Heart right ventricle (tissue), 16 donors: ENCODE measurements at regions of chrX and their contacts with region 1.

Region 1: DNA sequence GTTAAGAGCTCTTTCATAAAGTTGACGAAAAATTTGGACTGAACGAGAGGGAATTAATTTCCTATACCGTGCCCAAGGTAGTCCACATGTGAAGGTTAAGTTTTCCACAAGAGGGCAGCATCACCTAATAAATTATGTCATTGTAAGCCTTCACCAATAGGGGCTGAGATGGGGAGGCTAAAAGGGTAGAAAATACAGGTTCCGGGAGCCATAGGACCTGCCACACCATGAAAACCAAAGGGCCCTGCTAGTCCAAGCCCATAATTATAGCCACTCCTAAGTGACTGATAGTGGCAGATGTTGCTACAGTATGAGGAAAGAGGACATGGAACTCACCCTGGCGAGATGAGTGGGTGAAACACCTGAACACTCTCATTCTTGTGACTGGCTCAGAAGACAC is 122.2 kb downstream of the SHROOM4 start:
- DNase-seq: no peak
- ATAC-seq: peak in 6 of 8 donors; percentile 44 to 65 (median 58)
- H3K4me3 ChIP-seq: no peak overlapping the region
- H3K27ac ChIP-seq: no peak overlapping the region
- H3K4me1 ChIP-seq: no peaks in the 10 kb centered on the region
- H3K27me3 ChIP-seq: peaks cover 0 to 59% (median 0%) of the 10 kb centered on the region in 7 donors
- CTCF ChIP-seq: peak; percentile 21 to 73 (median 63)

Region 2: GRCh38 chrX:50622751-50623150 is 69.1 kb before region 1 on chrX:
- intact Hi-C with region 1: no loop called
- DNase-seq: no peak
- ATAC-seq: no peak
- H3K4me3 ChIP-seq: no peak overlapping the region
- H3K27ac ChIP-seq: no peak overlapping the region
- H3K4me1 ChIP-seq: peaks cover 0 to 10% (median 2%) of the 10 kb centered on the region in 9 donors
- H3K27me3 ChIP-seq: peaks cover 0 to 18% (median 0%) of the 10 kb centered on the region in 7 donors
- CTCF ChIP-seq: no peak

Region 3: GRCh38 chrX:50905334-50905733 is 213.5 kb after region 1 on chrX:
- intact Hi-C with region 1: loop called in 2 of 10 experiments (anchors 5 kb)
- DNase-seq: no peak
- ATAC-seq: no peak
- H3K4me3 ChIP-seq: no peak overlapping the region
- H3K27ac ChIP-seq: no peak overlapping the region
- H3K4me1 ChIP-seq: no peaks in the 10 kb centered on the region
- H3K27me3 ChIP-seq: peaks cover 0 to 52% (median 0%) of the 10 kb centered on the region in 7 donors
- CTCF ChIP-seq: peak in 3 of 9 donors; percentile 6 to 44 (median 11)

Region 4: GRCh38 chrX:50920132-50920531 is 228.3 kb after region 1 on chrX:
- intact Hi-C with region 1: loop called in 3 of 10 experiments (anchors 5 kb)
- DNase-seq: no peak
- ATAC-seq: no peak
- H3K4me3 ChIP-seq: no peak overlapping the region
- H3K27ac ChIP-seq: no peak overlapping the region
- H3K4me1 ChIP-seq: no peaks in the 10 kb centered on the region
- H3K27me3 ChIP-seq: peaks cover 0 to 34% (median 0%) of the 10 kb centered on the region in 7 donors
- CTCF ChIP-seq: peak in 7 of 9 donors; percentile 25 to 49 (median 39)

Region 5: DNA sequence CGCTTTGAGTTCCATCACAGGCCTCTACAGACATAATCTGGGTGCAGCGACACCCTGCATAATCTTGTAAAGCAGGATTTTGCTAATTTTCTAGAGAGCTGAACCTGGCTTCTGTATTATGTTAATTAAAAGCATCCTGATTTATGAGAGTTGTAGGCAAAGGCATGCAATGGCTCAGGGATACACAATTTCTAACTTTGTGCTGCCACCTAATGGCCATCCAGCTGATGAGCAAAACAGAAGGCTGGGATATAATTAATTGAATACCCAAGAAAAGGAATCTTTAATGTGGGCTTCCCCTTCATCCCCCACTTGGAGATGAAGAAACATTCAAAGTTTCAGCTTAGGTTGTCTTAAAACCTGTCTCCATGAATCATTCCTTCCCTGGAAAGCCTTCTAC is 296.8 kb after region 1 on chrX:
- intact Hi-C with region 1: loop called in 8 of 10 experiments (anchors 2 to 10 kb)
- DNase-seq: peak in 1 of 2 donors; percentile 3
- ATAC-seq: no peak
- H3K4me3 ChIP-seq: no peak overlapping the region
- H3K27ac ChIP-seq: no peak overlapping the region
- H3K4me1 ChIP-seq: no peaks in the 10 kb centered on the region
- H3K27me3 ChIP-seq: peaks cover 0 to 46% (median 0%) of the 10 kb centered on the region in 7 donors
- CTCF ChIP-seq: peak in 8 of 9 donors; percentile 17 to 60 (median 56)

Region 6: DNA sequence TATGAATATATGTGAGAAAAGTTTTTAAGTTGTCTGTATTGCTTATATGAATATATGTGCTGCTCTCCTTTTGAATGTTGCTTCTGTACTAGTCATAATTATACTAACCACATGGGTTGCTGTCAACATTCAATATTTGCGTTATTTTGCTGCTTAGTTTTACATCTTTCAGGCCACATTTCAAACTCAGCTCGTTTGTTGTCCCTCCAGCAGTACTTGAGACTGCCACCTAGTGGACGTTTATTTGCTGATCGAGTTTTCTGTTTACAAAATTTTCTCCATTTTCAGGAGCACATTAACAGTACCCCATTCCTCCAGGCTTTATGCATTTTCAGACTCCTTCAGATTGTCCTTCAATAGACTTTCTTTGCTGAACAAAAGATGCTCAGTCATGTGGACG is 728.8 kb after region 1 on chrX:
- intact Hi-C with region 1: loop called in 1 of 10 experiments (anchors 10 kb)
- DNase-seq: peak in 1 of 2 donors; percentile 9
- ATAC-seq: no peak
- H3K4me3 ChIP-seq: no peak overlapping the region
- H3K27ac ChIP-seq: no peak overlapping the region
- H3K4me1 ChIP-seq: no peaks in the 10 kb centered on the region
- H3K27me3 ChIP-seq: peaks cover 0 to 65% (median 0%) of the 10 kb centered on the region in 7 donors
- CTCF ChIP-seq: peak; percentile 37 to 82 (median 58)